Gastrocnemius medialis (tissue), 4 donors: ENCODE measurements at regions of chr12 and their contacts with region 1.

Region 1: GRCh38 chr12:14365294-14366208 is at the start of gene ATF7IP:
- DNase-seq: peak; percentile 90 to 96
- ATAC-seq: peak; percentile 95 to 96
- H3K4me3 ChIP-seq: peak within 1 kb of the TSS; percentile 71 to 89 (median 86)
- H3K27ac ChIP-seq: peak within 1 kb of the TSS; percentile 94 to 96 (median 95)
- H3K4me1 ChIP-seq: peaks cover 0 to 12% of the 10 kb centered on the region in 2 donors
- H3K27me3 ChIP-seq: no peaks in the 10 kb centered on the region
- CTCF ChIP-seq: peak in 2 of 5 experiments; percentile 30 to 40
- POLR2A ChIP-seq: peak; percentile 66 to 86
- total RNA-seq, gene ATF7IP: 15.9 to 42.2 (median 30.7) TPM

Region 2: GRCh38 chr12:14417715-14418114 is 52.2 kb after region 1 on chr12:
- in situ Hi-C with region 1: loop called in 1 of 4 experiments (anchors 10 kb)
- intact Hi-C with region 1: no loop called
- DNase-seq: peak; percentile 41 to 64
- ATAC-seq: peak; percentile 90 to 91
- H3K4me3 ChIP-seq: peak overlapping the region in 3 of 4 donors; percentile 9 to 29 (median 11)
- H3K27ac ChIP-seq: peak overlapping the region in 3 of 4 donors; percentile 23 to 65 (median 49)
- H3K4me1 ChIP-seq: peaks cover 22 to 55% of the 10 kb centered on the region in 2 donors
- H3K27me3 ChIP-seq: no peaks in the 10 kb centered on the region
- CTCF ChIP-seq: no peak
- POLR2A ChIP-seq: no peak

Region 3: GRCh38 chr12:14567351-14568162 is 202.0 kb after region 1 on chr12 and contains the start of gene PLBD1:
- in situ Hi-C with region 1: no loop called
- intact Hi-C with region 1: loop called (anchors 5 kb)
- DNase-seq: peak; percentile 55 to 80
- ATAC-seq: peak; percentile 87
- H3K4me3 ChIP-seq: peak within 1 kb of the TSS; percentile 63 to 73 (median 68)
- H3K27ac ChIP-seq: peak within 1 kb of the TSS; percentile 84 to 94 (median 89)
- H3K4me1 ChIP-seq: peaks cover 5 to 8% of the 10 kb centered on the region in 2 donors
- H3K27me3 ChIP-seq: no peaks in the 10 kb centered on the region
- CTCF ChIP-seq: no peak
- POLR2A ChIP-seq: peak; percentile 71 to 80
- total RNA-seq, gene PLBD1: 3.0 to 7.1 (median 5.8) TPM